PC-3 (cell line): ENCODE measurements at regions of chr11 and their contacts with region 1.

Region 1: GRCh38 chr11:6523253-6523652 is 26.2 kb downstream of the DNHD1 start:
- DNase-seq: peak; percentile 87
- ATAC-seq: peak; percentile 97
- H3K4me3 ChIP-seq: no peak overlapping the region
- H3K27ac ChIP-seq: peak overlapping the region; percentile 80
- H3K4me1 ChIP-seq: peaks cover 17% of the 10 kb centered on the region
- H3K27me3 ChIP-seq: no peaks in the 10 kb centered on the region
- CTCF ChIP-seq: no peak

Region 2: DNA sequence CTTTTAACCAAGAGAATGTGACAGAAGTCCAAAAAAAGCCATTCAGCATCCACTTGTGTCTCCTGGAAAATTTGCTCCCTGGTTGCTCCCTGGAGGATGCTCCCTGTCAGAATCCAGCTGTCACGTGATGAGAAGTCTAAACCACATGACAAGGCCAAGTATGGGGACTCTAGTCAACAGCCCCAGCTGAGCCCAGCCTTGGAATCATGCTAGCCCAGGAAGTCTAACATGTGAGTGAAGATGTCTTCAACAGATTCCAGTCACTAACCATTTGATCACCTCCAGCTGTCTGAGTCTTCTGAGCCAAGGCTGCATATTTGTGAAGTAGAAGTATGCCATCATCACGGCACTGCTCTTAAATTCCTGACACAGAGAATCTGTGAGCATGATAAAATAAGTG is 411.6 kb before region 1 on chr11:
- CTCF ChIA-PET with region 1: no interaction called
- POLR2A ChIA-PET with region 1: no interaction called
- intact Hi-C with region 1: no loop called
- DNase-seq: no peak
- ATAC-seq: no peak
- H3K4me3 ChIP-seq: no peak overlapping the region
- H3K27ac ChIP-seq: no peak overlapping the region
- H3K4me1 ChIP-seq: no peaks in the 10 kb centered on the region
- H3K27me3 ChIP-seq: no peaks in the 10 kb centered on the region
- CTCF ChIP-seq: no peak

Region 3: DNA sequence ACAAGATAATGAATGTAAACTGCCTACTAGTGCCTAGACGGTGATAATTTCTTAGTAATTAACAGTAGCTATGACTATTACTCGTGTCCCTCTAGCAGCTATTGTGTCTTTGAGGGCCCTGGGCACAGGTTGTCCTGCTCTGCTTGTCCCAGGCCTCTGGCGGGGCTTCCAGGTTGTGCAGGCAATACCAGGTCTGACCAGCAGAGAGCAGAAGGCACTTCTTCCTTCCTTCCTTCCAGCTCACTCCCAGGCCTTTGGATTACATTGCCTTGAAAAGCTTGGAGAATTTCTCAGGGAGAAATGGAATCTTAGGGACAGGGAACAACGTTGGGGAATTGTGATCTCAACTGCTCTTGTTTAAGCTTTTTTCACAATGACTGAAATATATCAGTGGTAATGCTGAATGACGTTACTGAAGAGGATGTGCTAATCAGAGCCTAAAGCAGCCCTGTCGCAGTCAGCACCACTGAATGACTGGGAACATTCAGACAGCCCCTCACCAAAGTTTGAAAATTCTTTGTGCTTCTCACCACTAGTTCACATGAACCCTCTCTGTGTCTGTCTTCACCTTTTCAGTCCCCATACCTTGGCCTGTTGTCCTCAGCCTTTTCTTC is 272.0 kb before region 1 on chr11:
- CTCF ChIA-PET with region 1: no interaction called
- POLR2A ChIA-PET with region 1: no interaction called
- intact Hi-C with region 1: no loop called
- DNase-seq: peak; percentile 78
- ATAC-seq: peak; percentile 88
- H3K4me3 ChIP-seq: no peak overlapping the region
- H3K27ac ChIP-seq: no peak overlapping the region
- H3K4me1 ChIP-seq: no peaks in the 10 kb centered on the region
- H3K27me3 ChIP-seq: peaks cover 17% of the 10 kb centered on the region; the same call in 1 of the 2 replicates
- CTCF ChIP-seq: peak; percentile 80

Region 4: GRCh38 chr11:6565988-6566703 is 42.9 kb after region 1 on chr11:
- CTCF ChIA-PET with region 1: no interaction called
- POLR2A ChIA-PET with region 1: interaction called, 10 read pairs
- intact Hi-C with region 1: no loop called
- DNase-seq: no peak
- ATAC-seq: no peak
- H3K4me3 ChIP-seq: no peak overlapping the region
- H3K27ac ChIP-seq: no peak overlapping the region
- H3K4me1 ChIP-seq: peaks cover 9% of the 10 kb centered on the region
- H3K27me3 ChIP-seq: no peaks in the 10 kb centered on the region
- CTCF ChIP-seq: no peak